ENCODE measurements at regions of chr9 and their contacts with region 1.

Region 1: DNA sequence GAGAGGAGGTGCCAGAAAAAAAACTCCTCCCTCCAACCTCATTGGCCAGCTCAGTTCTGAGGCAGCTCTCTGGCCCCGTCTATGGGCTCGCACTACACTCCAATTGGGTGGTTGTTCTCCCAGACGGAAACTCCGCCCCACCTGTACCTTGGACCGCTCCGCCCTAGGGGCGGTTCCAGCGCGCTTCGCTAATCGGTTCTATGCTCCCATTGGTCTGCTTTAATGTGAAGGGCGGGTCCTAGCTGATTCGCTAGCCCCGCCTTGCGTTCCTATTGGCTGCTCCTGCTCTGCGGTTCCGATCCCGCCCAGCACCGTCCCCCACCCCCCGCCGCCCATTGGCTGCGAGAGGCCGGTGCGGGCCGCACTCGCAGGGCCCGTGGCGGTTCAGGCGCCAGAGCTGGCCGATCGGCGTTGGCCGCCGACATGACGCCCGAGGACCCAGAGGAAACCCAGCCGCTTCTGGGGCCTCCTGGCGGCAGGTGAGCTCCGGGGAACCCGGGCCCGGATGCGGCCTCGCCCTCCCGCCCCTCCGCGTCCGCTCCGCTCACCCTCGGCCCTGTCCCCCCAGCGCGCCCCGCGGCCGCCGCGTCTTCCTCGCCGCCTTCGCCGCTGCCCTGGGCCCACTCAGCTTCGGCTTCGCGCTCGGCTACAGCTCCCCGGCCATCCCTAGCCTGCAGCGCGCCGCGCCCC is at the start of gene SLC2A8:
- DNase-seq: peak; percentile 74 to 97 (median 95)
- H3K4me3 ChIP-seq: peak within 1 kb of the TSS; percentile 42
- H3K4me3 Mint-ChIP-seq: peak within 1 kb of the TSS; percentile 72 to 91 (median 77)
- H3K27ac ChIP-seq: peak within 1 kb of the TSS; percentile 14
- H3K27ac Mint-ChIP-seq: peak within 1 kb of the TSS in 4 of 8 donors; percentile 59 to 89 (median 70)
- H3K4me1 ChIP-seq: peaks cover 18% of the 10 kb centered on the region
- H3K4me1 Mint-ChIP-seq: peaks cover 11 to 18% (median 14%) of the 10 kb centered on the region in 3 donors
- H3K27me3 ChIP-seq: peaks cover 42% of the 10 kb centered on the region
- H3K27me3 Mint-ChIP-seq: peaks cover 23 to 57% of the 10 kb centered on the region in 2 donors
- total RNA-seq, gene SLC2A8: 6.2 to 7.7 TPM

Region 2: DNA sequence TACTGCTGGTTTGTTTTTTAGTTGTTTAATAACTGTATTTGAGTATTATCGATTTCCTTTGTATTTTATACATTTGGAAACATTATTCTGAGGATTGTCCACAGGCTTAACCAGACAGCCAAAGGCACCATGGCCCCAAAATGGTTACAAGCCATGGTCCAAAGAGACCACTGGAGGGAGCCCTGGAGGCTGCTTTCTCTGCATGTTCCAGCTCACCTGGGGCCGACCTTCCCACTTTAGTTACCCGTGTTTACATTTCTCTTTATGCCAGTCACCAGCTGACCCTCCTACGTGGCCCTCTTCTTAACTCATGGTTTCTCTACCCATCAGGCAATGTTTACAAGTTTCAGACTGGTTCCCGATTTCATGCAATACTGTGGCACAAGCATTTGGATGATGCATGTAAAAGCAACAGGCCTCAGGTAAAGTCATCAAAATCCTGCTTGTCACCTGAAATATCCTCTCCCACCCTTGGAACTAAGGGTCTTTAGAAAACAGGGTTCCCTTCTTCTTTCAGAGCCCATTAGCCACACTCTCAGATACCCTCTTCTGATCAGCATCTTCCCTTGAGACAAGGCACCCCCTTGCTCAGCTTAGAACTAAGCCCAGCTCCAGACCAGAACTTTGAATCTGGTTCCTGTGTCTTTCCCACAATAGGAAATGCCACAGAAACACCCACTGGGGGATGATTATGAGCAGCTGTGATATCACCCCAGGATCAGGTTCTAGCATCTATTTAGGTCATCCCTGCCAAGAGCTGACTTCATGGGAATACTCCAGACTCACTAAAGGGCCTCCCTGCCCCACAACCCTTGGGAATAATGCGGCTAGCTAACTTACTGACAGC is 182.3 kb before region 1 on chr9:
- CTCF ChIA-PET with region 1: interaction called, 10 read pairs
- POLR2A ChIA-PET with region 1: no interaction called
- DNase-seq: peak; percentile 20 to 71 (median 36)
- H3K4me3 ChIP-seq: no peak overlapping the region
- H3K4me3 Mint-ChIP-seq: no peak overlapping the region
- H3K27ac ChIP-seq: no peak overlapping the region
- H3K27ac Mint-ChIP-seq: peak overlapping the region in 2 of 8 donors; percentile 4 to 26
- H3K4me1 ChIP-seq: no peaks in the 10 kb centered on the region
- H3K4me1 Mint-ChIP-seq: peaks cover 0 to 4% (median 3%) of the 10 kb centered on the region in 3 donors
- H3K27me3 ChIP-seq: peaks cover 3% of the 10 kb centered on the region
- H3K27me3 Mint-ChIP-seq: peaks cover 0 to 1% of the 10 kb centered on the region in 2 donors

Region 3: GRCh38 chr9:127437497-127438264 is 40.7 kb after region 1 on chr9:
- CTCF ChIA-PET with region 1: no interaction called
- POLR2A ChIA-PET with region 1: no interaction called
- DNase-seq: peak in 4 of 5 donors; percentile 33 to 66 (median 54)
- H3K4me3 ChIP-seq: no peak overlapping the region
- H3K4me3 Mint-ChIP-seq: peak overlapping the region; percentile 19 to 75 (median 63)
- H3K27ac ChIP-seq: no peak overlapping the region
- H3K27ac Mint-ChIP-seq: peak overlapping the region; percentile 36 to 97 (median 90)
- H3K4me1 ChIP-seq: no peaks in the 10 kb centered on the region
- H3K4me1 Mint-ChIP-seq: peaks cover 17 to 30% (median 29%) of the 10 kb centered on the region in 3 donors
- H3K27me3 ChIP-seq: no peaks in the 10 kb centered on the region
- H3K27me3 Mint-ChIP-seq: no peaks in the 10 kb centered on the region

Region 4: DNA sequence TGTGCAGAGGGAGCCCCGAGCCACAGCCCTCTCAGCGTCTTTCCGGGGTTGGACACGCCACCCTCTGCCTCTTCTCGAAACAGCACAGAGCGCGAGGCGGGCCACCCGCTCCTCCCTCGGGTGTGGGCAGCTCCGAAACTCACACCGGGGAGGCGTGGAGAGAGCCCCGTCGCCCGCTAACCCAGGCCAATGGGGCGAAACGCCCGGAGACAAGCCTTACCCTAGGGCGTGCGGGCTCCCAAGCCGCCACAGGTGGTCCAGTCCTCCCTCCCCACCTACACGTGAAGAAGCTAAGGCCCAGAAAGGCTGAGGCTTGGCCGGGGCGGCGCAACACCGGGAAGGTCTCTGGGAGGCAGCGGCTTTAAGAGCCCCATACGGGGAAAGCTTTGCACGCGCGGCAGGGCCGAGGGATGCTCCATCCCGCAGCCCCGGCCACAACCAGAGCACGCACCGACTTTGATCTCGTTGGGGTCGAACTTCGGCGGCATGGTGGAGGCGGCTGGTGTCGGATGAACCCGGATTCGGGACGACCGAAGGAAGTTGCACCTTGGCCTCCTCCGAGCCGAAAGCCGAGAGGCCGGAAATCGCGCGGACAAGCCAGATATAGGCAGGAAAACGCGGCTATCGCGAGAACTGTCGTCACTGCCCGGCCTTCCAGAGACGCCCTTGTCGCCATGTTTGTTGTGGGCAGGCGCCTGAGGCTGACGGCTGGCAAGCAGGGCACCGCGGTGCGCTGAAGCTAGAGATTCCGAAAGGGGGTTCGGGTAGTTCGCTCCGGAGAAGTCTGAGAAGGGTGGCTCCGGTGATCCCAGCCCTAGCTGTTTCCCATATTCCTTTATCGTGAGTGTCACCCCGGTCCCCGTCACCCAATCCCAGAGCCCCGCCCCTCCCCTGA is 54.1 kb after region 1 on chr9 and contains the starts of genes LRSAM1 and RPL12:
- CTCF ChIA-PET with region 1: interaction called, 4 read pairs
- POLR2A ChIA-PET with region 1: interaction called, 18 read pairs
- DNase-seq: peak; percentile 97 to 99 (median 98)
- H3K4me3 ChIP-seq: peak within 1 kb of the TSS; percentile 98
- H3K4me3 Mint-ChIP-seq: peak within 1 kb of the TSS; percentile 95 to 99 (median 97)
- H3K27ac ChIP-seq: peak within 1 kb of the TSS; percentile 94
- H3K27ac Mint-ChIP-seq: peak within 1 kb of the TSS; percentile 83 to 99 (median 96)
- H3K4me1 ChIP-seq: peaks cover 30% of the 10 kb centered on the region
- H3K4me1 Mint-ChIP-seq: peaks cover 36 to 51% (median 50%) of the 10 kb centered on the region in 3 donors
- H3K27me3 ChIP-seq: no peaks in the 10 kb centered on the region
- H3K27me3 Mint-ChIP-seq: no peaks in the 10 kb centered on the region
- total RNA-seq, gene LRSAM1: 22.6 to 23.0 TPM
- total RNA-seq, gene RPL12: 1,457 to 1,549 TPM

Measured in CD8-positive, alpha-beta memory T cell (primary cell).